A549 (cell line): ENCODE measurements at regions of chr17 and their contacts with region 1.

Region 1: DNA sequence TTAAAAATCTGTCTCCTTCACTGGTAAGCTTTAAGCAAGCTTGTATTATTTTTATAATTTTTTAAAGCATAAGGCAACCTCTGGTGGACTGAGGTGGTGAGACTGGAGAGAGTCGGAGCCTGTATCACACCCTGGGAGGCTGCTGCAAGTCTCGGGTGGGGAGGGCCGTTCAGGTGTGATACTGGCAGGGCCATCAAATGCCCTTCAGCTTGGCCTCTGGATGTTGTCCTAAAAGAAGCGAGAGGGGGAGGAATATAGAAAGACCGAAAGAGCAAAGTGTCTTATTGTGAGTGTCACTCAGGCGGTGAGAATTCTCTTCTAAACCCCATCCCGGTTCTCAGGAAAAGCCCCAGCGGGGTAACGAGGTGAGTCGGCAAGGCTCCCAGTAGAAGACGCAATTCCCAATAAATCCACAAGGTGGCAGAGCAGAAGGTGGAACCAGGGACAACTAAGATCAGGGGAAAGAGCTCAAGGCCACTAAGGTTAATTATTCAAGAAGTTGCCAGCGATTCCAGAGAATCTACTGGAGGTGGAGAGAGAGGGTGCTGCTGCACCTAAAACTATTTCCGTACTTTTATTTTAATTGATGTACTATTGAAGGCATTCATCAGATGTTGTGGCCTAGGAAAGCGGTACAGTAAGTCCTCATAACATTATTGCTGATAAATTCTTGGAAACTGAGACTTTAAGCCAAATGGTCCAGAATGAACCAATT is 14.1 kb downstream of the C17orf67 start:
- DNase-seq: peak; percentile 81 to 91
- ATAC-seq: peak; percentile 94 to 98
- H3K4me3 ChIP-seq: no peak overlapping the region
- H3K27ac ChIP-seq: peak overlapping the region in 1 of 2 experiments; percentile 47; a peak in 1 of 6 replicates
- H3K4me1 ChIP-seq: peaks cover 9% of the 10 kb centered on the region
- CTCF ChIP-seq: peak; percentile 94
- EP300 ChIP-seq: no peak
- POLR2A ChIP-seq: no peak
- RAD21 ChIP-seq: peak; percentile 84 to 85

Region 2: DNA sequence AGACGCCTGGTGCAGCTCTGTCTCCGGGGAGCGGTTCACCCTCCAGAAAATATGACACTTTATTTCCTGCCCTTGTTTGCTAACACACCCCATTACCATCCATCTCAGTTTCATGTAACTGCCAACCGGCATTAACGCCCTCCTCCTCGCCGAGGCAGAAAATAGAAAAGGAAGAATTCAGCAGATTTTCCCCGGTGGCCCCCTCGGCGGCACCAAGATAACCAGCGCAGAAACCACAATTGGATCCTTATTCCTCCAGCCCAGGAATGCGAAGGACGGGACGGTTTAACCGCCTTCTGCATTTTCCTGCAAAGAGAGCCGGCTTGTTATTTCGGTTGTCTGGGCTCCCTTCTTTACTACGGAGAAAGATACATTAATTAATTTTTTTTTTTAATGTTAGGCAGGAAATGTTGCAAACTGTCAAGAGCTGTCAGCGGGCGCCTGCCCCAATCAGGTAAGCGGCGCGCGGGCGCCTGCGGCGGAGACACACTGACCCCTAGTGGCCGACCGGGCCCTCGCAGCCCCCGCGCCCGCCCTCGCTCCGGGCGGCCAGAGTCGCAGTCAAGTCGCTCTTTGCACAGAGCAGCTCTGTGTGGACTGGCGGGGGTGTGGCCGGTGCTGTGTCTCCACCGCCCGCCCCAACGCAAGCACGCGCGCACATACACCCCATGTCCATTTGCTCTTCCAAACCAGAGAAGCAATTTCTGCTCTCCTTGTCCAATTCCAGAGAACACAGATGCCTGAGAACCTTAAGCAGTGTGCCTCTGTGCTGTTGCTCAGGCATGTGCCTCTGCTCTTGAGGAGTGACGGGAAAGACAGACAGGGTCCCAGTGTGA is 39.5 kb before region 1 on chr17:
- CTCF ChIA-PET with region 1: interaction called, 18 read pairs
- POLR2A ChIA-PET with region 1: no interaction called
- DNase-seq: peak; percentile 67 to 77
- ATAC-seq: peak; percentile 94 to 98
- H3K4me3 ChIP-seq: peak overlapping the region; percentile 22; the same call in 1 of the 3 replicates
- H3K27ac ChIP-seq: peak overlapping the region in 1 of 2 experiments; percentile 64; a peak in 3 of 6 replicates
- H3K4me1 ChIP-seq: peaks cover 6% of the 10 kb centered on the region; the same call in 2 of the 3 replicates
- CTCF ChIP-seq: peak; percentile 99
- EP300 ChIP-seq: no peak
- POLR2A ChIP-seq: no peak
- RAD21 ChIP-seq: peak; percentile 91 to 98

Region 3: GRCh38 chr17:56804454-56804853 is 15.1 kb before region 1 on chr17:
- CTCF ChIA-PET with region 1: interaction called, 10 read pairs
- POLR2A ChIA-PET with region 1: no interaction called
- DNase-seq: no peak
- ATAC-seq: no peak
- H3K4me3 ChIP-seq: no peak overlapping the region
- H3K27ac ChIP-seq: no peak overlapping the region
- H3K4me1 ChIP-seq: no peaks in the 10 kb centered on the region
- CTCF ChIP-seq: no peak
- EP300 ChIP-seq: no peak
- POLR2A ChIP-seq: no peak
- RAD21 ChIP-seq: no peak

Region 4: GRCh38 chr17:56867948-56868376 is 48.4 kb after region 1 on chr17:
- CTCF ChIA-PET with region 1: interaction called, 20 read pairs
- POLR2A ChIA-PET with region 1: no interaction called
- DNase-seq: no peak
- ATAC-seq: peak in 1 of 2 experiments; percentile 43; a peak in 4 of 6 replicates
- H3K4me3 ChIP-seq: no peak overlapping the region
- H3K27ac ChIP-seq: no peak overlapping the region
- H3K4me1 ChIP-seq: no peaks in the 10 kb centered on the region
- CTCF ChIP-seq: no peak
- EP300 ChIP-seq: no peak
- POLR2A ChIP-seq: no peak
- RAD21 ChIP-seq: no peak

Region 5: DNA sequence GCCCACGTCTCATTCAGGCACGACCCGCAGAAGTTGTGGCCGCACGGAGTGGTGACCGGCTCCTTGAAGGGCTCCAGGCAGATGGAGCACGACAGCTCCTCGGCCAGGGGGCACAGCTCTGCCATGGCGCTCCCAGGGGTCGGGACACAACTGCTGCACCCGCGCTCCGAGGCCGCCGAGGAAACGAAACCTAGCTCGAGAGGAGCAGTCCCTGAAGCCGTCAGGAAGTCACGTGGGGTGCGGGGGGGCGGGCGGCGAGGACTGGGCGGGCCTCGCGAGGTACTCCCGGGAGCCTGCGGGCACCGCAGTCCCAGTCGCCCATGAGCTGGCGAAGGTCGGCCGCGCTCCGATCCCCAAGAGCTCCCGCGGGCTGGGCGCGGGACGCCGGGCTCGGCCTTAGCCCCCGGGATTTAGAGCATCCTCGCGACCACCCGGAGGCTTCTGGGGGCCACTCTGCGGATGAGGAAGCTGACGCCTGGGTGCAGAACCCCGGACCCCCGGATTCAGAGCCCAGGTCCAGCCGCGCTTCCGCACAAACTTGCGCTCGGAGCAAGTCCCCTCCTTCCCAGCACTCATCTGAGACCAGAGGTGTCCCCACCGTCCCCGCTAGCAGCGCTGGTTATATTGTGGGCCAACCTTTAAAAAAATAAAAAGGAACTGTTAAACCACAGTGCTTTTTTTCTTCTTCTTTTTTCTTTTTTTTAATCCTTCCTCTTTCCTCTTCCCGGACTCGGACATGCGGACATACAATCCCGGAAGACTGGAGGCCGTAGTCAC is 94.5 kb after region 1 on chr17 and contains the start of gene TRIM25:
- CTCF ChIA-PET with region 1: interaction called, 10 read pairs
- POLR2A ChIA-PET with region 1: interaction called, 12 read pairs
- DNase-seq: peak; percentile 93 to 98
- ATAC-seq: peak; percentile 78 to 91
- H3K4me3 ChIP-seq: peak within 1 kb of the TSS; percentile 63
- H3K27ac ChIP-seq: peak within 1 kb of the TSS; percentile 93 to 94
- H3K4me1 ChIP-seq: peaks cover 42% of the 10 kb centered on the region
- CTCF ChIP-seq: no peak
- EP300 ChIP-seq: no peak
- POLR2A ChIP-seq: peak; percentile 98
- RAD21 ChIP-seq: 0 out of 5 replicates have a peak, but pooled peaks of 1 of the 2 experiments have one; percentile 22
- polyA plus RNA-seq, gene TRIM25: 56.6 and 65.4 TPM in 2 replicates

Region 6: DNA sequence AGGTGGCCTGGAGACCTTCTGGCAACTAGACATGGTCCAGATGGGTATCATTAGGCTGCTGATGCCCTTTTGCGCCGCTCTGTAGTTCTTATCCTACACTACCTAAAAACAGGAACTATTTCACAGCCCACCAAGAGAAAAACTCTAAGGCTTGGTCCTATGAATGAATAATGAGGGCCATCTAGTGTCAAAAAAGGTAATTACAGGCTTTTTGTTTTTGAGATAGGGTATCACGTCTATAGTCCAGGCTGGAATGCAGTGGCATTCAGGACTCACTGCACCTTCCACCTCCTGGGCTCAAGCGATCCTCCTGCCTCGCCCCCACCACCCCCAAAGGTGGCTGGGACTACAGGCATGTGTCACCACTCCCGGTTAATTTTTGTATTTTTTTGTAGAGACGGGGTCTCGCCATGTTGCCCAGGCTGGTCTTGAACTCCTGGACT is 120.3 kb after region 1 on chr17:
- CTCF ChIA-PET with region 1: interaction called, 283 read pairs
- POLR2A ChIA-PET with region 1: interaction called, 3 read pairs
- DNase-seq: peak; percentile 63 to 80
- ATAC-seq: peak; percentile 88 to 92
- H3K4me3 ChIP-seq: no peak overlapping the region
- H3K27ac ChIP-seq: peak overlapping the region in 1 of 2 experiments; percentile 17; a peak in 1 of 6 replicates
- H3K4me1 ChIP-seq: no peaks in the 10 kb centered on the region
- CTCF ChIP-seq: peak; percentile 81
- EP300 ChIP-seq: no peak
- POLR2A ChIP-seq: no peak
- RAD21 ChIP-seq: peak; percentile 93 to 94

Region 7: DNA sequence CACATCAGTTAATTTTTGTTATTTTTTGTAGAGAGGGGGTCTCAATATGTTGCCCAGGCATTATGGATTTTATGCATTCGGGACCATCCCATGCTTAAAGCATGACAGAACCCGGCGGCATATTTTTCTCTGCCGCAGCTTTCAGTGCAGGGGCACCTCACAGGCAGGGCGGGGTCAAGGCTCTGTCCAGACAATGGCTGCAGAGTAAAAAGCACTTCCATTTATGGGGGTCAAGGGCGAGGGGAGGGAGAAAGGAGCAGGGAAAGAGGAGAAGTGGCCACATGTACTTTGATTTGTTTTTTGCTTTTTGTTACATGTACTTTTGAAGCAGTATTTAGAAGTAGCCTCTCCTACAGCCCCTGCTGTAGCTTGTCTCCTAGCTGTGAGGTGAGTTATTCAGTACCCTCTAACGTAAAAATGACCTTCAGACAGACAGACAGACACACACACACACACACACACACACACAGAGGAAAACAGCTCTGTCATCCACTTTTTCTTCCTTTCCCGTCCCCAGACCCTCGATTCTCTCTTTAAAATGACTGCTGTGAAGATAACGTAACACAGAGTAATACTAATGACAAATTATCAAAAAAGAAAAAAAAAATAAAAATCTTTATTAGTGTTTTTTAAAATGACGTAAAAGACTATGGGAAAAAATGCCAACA is 157.5 kb after region 1 on chr17:
- CTCF ChIA-PET with region 1: interaction called, 10 read pairs
- POLR2A ChIA-PET with region 1: no interaction called
- DNase-seq: no peak
- ATAC-seq: no peak
- H3K4me3 ChIP-seq: peak overlapping the region; percentile 51
- H3K27ac ChIP-seq: no peak overlapping the region; a peak in 1 of 6 replicates
- H3K4me1 ChIP-seq: peaks cover 11% of the 10 kb centered on the region; the same call in 1 of the 3 replicates
- CTCF ChIP-seq: no peak
- EP300 ChIP-seq: no peak
- POLR2A ChIP-seq: no peak
- RAD21 ChIP-seq: no peak

Region 8: GRCh38 chr17:57017625-57018024 is 198.0 kb after region 1 on chr17:
- CTCF ChIA-PET with region 1: no interaction called
- POLR2A ChIA-PET with region 1: no interaction called
- DNase-seq: no peak
- ATAC-seq: peak in 1 of 2 experiments; percentile 27; a peak in 2 of 6 replicates
- H3K4me3 ChIP-seq: no peak overlapping the region
- H3K27ac ChIP-seq: no peak overlapping the region
- H3K4me1 ChIP-seq: peaks cover 15% of the 10 kb centered on the region
- CTCF ChIP-seq: no peak
- EP300 ChIP-seq: no peak
- POLR2A ChIP-seq: no peak
- RAD21 ChIP-seq: no peak